CD14-positive monocyte (primary cell): ENCODE measurements at regions of chr6 and their contacts with region 1.

Region 1: DNA sequence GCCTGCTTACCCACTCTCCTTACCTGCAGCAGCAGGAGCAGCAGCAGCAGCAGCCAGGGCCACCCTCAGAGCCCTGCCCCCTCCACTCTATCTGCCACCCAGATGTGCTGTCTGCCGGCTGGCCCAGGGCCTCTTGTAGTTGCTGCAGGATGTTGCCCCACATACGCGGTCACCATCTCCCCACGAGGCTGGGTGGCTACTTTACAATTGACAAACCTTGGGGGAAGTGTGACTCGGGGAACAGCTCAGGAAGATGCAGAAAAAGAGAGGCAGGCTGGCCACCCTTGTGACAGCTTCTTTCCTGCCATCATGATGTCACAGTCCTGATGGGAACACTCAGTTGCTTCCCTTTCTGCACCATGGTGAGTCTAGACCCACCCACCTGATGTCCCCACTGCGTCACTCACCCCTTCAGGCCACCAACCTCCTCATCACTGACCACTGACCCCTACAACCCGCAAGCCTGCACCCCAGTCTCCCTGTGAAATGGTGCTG is 14.5 kb downstream of the TREM1 start:
- DNase-seq: peak; percentile 98 to 99 (median 99)
- H3K4me3 ChIP-seq: peak overlapping the region in 2 of 3 experiments; percentile 18 to 60
- H3K4me3 Mint-ChIP-seq: peak overlapping the region; percentile 75 to 95
- H3K27ac ChIP-seq: peak overlapping the region; percentile 89 to 94
- H3K27ac Mint-ChIP-seq: peak overlapping the region; percentile 99 to 100 (median 100)
- H3K4me1 ChIP-seq: peaks cover 76 to 85% of the 10 kb centered on the region in 2 donors
- H3K4me1 Mint-ChIP-seq: peaks cover 82% of the 10 kb centered on the region
- H3K27me3 ChIP-seq: no peaks in the 10 kb centered on the region
- H3K27me3 Mint-ChIP-seq: peaks cover 0 to 4% (median 2%) of the 10 kb centered on the region in 3 donors
- CTCF ChIP-seq: no peak

Region 2: DNA sequence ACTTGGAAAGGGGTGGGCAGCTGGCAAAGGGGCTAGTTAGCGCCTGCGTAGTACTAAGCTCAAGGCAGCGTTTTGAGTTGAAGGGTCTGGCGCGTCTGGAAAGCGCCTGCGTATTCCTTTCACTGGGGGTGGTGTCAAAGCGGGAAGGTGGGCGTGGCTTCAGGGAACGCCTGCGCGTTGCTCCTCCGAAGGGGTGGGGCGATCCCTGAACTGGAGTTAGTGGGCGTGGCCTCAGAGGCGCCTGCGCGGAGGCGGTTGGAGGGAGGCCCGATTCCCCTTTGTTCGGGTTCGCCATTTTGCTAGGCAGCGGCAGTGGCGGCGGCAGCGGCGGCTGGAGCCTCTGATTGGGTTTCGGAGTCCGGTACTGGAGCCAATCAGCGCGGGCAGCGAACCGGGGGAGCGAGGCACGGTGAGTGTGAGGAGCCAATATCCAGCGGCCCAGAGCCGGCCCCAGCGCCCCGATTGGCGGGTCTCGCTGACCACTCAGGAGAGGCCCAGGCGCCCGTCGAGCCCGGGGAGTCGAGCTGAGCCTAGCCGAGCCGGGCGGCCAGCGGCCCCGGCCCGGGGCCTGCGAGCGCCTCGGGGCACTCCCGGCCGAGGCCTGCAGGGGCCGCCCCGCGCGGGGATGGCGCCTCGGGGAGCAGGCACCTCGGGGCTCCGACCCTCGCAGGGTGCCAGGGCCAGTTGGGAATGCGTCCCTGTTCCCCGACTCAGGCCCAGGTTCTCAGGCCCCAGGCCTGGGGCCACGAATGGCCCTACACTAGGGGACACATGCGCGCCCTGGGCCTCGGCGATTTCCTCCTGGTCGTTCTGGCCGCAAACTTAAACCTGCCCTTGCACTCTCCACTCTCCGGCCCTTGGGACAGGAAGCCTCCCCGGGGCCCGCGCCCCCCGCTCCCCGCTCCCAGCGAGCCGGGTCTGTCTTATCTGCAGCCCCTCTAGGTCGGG is 199.0 kb before region 1 on chr6 and contains the start of gene NFYA:
- intact Hi-C with region 1: loop called in 1 of 2 experiments (anchors 5 kb)
- DNase-seq: peak in 2 of 3 donors; percentile 99 to 100
- H3K4me3 ChIP-seq: peak within 1 kb of the TSS; percentile 80 to 88 (median 88)
- H3K4me3 Mint-ChIP-seq: peak within 1 kb of the TSS; percentile 92 to 93
- H3K27ac ChIP-seq: peak within 1 kb of the TSS; percentile 96 to 98
- H3K27ac Mint-ChIP-seq: peak within 1 kb of the TSS; percentile 97 to 99 (median 98)
- H3K4me1 ChIP-seq: peaks cover 18 to 27% of the 10 kb centered on the region in 2 donors
- H3K4me1 Mint-ChIP-seq: peaks cover 29% of the 10 kb centered on the region
- H3K27me3 ChIP-seq: no peaks in the 10 kb centered on the region
- H3K27me3 Mint-ChIP-seq: no peaks in the 10 kb centered on the region
- CTCF ChIP-seq: peak; percentile 72
- polyA plus RNA-seq, gene NFYA: 9.7 to 21.4 (median 10.7) TPM

Region 3: DNA sequence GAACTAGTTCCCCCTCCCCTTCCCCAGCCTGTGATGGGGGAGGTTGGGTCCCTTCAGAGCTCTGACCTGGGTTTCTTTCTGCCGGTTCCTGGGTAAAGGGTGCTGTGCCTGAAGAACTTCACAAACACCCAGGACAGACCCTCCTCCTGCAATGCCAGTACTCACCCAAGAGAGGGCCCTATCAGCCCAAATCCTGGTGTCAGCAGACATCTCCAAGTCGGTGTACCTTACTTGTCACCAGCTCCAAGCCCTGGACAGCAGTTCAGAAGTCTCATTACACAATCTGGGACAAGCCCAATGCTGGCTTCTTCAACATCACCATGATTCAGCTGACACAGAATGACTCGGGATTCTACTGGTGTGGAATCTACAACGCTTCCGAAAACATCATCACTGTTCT is 43.3 kb before region 1 on chr6:
- intact Hi-C with region 1: loop called in 1 of 2 experiments (anchors 5 kb)
- DNase-seq: peak; percentile 82 to 99 (median 87)
- H3K4me3 ChIP-seq: peak overlapping the region in 1 of 3 experiments; percentile 51
- H3K4me3 Mint-ChIP-seq: no peak overlapping the region
- H3K27ac ChIP-seq: peak overlapping the region; percentile 60 to 98
- H3K27ac Mint-ChIP-seq: peak overlapping the region; percentile 85 to 96 (median 90)
- H3K4me1 ChIP-seq: peaks cover 19 to 29% of the 10 kb centered on the region in 2 donors
- H3K4me1 Mint-ChIP-seq: peaks cover 21% of the 10 kb centered on the region
- H3K27me3 ChIP-seq: no peaks in the 10 kb centered on the region
- H3K27me3 Mint-ChIP-seq: peaks cover 1 to 6% (median 2%) of the 10 kb centered on the region in 3 donors
- CTCF ChIP-seq: peak; percentile 66

Region 4: GRCh38 chr6:41286544-41287346 is 14.8 kb after region 1 on chr6 and contains the start of gene TREM1:
- intact Hi-C with region 1: loop called (anchors 2 kb)
- DNase-seq: peak; percentile 97 to 99 (median 99)
- H3K4me3 ChIP-seq: peak within 1 kb of the TSS; percentile 37 to 77 (median 76)
- H3K4me3 Mint-ChIP-seq: peak within 1 kb of the TSS; percentile 91 to 98
- H3K27ac ChIP-seq: peak within 1 kb of the TSS; percentile 100
- H3K27ac Mint-ChIP-seq: peak within 1 kb of the TSS; percentile 100
- H3K4me1 ChIP-seq: peaks cover 83 to 84% of the 10 kb centered on the region in 2 donors
- H3K4me1 Mint-ChIP-seq: peaks cover 85% of the 10 kb centered on the region
- H3K27me3 ChIP-seq: no peaks in the 10 kb centered on the region
- H3K27me3 Mint-ChIP-seq: peaks cover 0 to 12% (median 0%) of the 10 kb centered on the region in 3 donors
- CTCF ChIP-seq: no peak
- polyA plus RNA-seq, gene TREM1: 175 to 303 (median 240) TPM